ENCODE measurements at regions of chr4 and their contacts with region 1.

Region 1: DNA sequence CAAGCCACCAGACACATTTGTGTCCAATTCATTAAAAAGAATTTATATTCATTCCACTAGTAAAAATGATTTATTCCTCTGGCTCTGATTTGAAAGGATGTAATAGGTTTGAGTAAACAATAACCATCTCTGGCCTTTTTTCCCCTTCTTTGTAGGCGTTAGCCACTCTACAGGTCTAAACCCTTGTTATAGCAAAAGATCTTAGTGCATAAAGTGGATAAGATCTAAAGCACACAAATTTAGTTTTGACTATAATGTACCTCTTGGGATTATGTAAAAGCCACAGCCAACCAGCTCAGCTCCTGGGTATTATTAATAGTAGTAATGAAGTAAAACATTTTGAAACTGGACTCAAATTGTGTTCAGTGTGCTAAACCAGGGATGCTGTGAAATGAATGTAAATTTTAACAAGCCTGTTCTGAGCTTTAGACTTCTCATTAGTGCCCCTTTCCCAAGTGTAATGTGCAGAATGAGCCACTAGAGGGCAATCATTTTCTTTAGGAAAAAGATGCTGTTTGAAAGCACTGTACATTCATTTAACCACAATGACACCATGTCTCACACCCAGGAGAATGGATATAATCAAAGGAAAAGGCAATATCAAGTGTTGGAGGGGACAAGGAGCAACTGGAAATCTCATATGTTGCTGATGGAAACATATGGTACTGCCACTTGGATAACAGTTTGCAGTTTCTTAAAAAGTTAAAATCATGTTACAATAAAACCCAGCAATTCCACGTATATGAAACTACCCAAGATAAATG is 69.7 kb downstream of the KLHL8 start:
- DNase-seq: peak; percentile 59
- ATAC-seq: peak; percentile 88
- H3K4me3 Mint-ChIP-seq: no peak overlapping the region
- H3K27ac Mint-ChIP-seq: no peak overlapping the region
- H3K4me1 Mint-ChIP-seq: no peaks in the 10 kb centered on the region
- H3K27me3 Mint-ChIP-seq: no peaks in the 10 kb centered on the region
- CTCF ChIP-seq: peak; percentile 94

Region 2: GRCh38 chr4:87133183-87133582 is 17.5 kb before region 1 on chr4:
- CTCF ChIA-PET with region 1: interaction called, 23 read pairs
- POLR2A ChIA-PET with region 1: no interaction called
- intact Hi-C with region 1: no loop called
- DNase-seq: no peak
- ATAC-seq: no peak
- H3K4me3 Mint-ChIP-seq: no peak overlapping the region
- H3K27ac Mint-ChIP-seq: no peak overlapping the region
- H3K4me1 Mint-ChIP-seq: no peaks in the 10 kb centered on the region
- H3K27me3 Mint-ChIP-seq: no peaks in the 10 kb centered on the region
- CTCF ChIP-seq: no peak

Region 3: DNA sequence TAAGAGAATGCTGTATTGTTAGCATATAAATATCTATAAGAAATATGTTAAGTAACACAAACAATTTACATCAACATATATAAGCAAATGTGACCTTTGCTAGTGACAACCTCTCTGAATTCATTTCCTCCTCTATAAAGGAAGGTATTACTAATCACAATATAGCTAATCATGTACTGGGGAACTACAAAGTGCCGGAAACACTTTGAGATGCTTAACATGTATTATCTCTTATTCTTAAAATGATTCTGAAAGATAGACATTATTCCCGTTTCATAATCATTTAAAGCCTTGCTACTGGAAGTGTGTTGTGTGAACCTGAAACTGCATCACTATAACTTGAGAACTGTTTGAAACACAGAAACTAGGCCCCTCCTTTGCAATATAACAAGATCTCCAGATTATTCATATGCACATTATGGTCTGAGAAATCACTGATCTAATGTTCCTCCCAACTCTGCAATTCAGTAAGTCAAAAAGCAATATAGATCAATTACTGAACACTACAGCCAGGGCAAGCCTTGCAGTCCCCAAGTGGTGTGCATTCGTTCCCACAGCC is 15.7 kb after region 1 on chr4:
- CTCF ChIA-PET with region 1: interaction called, 19 read pairs
- POLR2A ChIA-PET with region 1: no interaction called
- intact Hi-C with region 1: no loop called
- DNase-seq: no peak
- ATAC-seq: no peak
- H3K4me3 Mint-ChIP-seq: no peak overlapping the region
- H3K27ac Mint-ChIP-seq: no peak overlapping the region
- H3K4me1 Mint-ChIP-seq: peaks cover 4% of the 10 kb centered on the region
- H3K27me3 Mint-ChIP-seq: no peaks in the 10 kb centered on the region
- CTCF ChIP-seq: no peak

Region 4: DNA sequence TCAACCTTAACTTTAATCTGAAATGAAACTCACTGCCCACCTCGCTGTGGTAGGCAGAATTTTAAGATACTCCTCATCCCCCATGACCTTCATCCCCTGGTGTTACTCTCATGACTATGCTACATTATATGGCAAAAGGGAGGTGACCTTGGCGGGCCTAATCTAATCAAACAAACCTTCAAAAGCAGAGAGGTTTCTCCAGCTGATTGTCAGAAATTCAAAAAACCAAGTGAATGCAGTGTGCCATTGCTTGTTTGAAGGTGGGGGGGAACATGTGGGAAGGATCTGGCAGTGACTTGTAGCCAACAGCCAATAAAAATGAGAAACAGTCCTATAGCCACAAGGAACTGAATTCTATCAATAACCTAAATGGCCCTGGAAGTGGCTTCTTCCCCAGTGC is 21.3 kb after region 1 on chr4:
- CTCF ChIA-PET with region 1: interaction called, 12 read pairs
- POLR2A ChIA-PET with region 1: no interaction called
- intact Hi-C with region 1: no loop called
- DNase-seq: no peak
- ATAC-seq: no peak
- H3K4me3 Mint-ChIP-seq: no peak overlapping the region
- H3K27ac Mint-ChIP-seq: no peak overlapping the region
- H3K4me1 Mint-ChIP-seq: no peaks in the 10 kb centered on the region
- H3K27me3 Mint-ChIP-seq: no peaks in the 10 kb centered on the region
- CTCF ChIP-seq: no peak

Region 5: DNA sequence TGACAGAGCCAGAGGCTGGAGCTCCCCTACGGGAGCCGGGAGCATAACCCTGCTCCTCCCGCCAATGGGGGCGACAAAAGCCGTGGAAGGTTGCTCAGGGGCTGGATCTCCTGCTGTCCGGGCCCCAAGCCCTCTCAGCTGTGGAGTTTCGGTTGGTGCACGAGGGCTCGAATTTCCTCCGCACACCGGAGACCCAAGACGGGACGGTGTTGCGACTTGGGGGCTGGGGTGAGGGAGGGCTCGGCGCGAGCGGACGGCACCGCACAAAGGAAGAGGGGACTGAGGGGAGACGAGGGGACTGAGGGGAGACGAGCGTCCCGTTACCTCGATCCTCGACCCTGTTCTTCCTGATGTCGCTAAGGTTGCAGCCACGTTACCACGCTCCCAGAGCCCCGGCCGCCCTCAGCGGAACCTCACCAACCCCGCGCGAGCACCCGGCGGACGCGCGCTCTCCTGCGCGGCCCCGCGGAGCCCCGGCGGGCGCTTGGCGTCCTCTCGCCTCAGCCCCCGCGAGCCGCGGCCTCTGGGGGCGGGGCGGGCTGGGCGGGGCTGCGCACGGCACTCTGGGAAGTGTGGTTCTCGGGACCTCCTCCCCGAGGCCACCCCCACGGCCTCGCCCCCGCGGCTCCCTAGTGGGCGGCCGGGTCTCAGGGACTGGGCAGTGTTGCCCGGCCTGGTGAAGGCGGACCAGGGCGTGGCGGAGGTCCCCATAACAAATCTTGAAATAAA is 69.6 kb after region 1 on chr4 and contains the start of gene KLHL8:
- CTCF ChIA-PET with region 1: interaction called, 17 read pairs
- POLR2A ChIA-PET with region 1: interaction called, 3 read pairs
- intact Hi-C with region 1: no loop called
- DNase-seq: peak; percentile 87
- ATAC-seq: peak; percentile 93
- H3K4me3 Mint-ChIP-seq: peak within 1 kb of the TSS; percentile 91
- H3K27ac Mint-ChIP-seq: peak within 1 kb of the TSS; percentile 92
- H3K4me1 Mint-ChIP-seq: peaks cover 17% of the 10 kb centered on the region
- H3K27me3 Mint-ChIP-seq: no peaks in the 10 kb centered on the region
- CTCF ChIP-seq: no peak
- total RNA-seq, gene KLHL8: 12.0 to 12.5 TPM

Region 6: DNA sequence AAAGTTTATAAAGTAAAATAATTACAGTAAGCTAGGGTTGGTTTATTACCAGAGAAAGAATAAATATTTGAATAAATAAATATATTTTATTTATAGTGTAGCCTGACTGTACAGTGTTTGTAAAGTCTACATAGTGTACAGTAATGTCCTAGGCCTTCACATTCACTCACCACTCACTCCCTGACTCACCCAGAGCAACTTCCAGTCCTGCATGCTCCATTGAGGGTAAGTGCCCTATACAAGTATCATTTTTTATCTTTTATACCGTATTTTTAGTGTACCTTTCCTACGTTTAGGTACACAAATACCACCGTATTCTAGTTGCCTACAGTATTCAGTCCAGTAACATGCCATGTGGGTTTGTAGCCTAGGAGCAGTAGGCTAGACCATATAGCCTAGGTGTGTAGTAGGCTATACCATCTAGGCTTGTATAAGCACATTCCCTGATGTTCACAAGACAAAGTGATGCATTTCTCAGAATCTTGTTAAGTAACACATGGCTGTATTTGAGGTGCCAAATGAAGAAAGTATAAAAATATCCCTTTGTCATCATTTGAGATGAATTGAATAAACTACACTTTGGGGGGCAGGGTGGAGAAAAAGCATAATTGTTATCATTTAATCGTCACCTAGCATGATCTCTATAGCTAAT is 84.5 kb after region 1 on chr4:
- CTCF ChIA-PET with region 1: interaction called, 50 read pairs
- POLR2A ChIA-PET with region 1: no interaction called
- intact Hi-C with region 1: loop called (anchors 2 kb)
- DNase-seq: no peak
- ATAC-seq: no peak
- H3K4me3 Mint-ChIP-seq: peak overlapping the region; percentile 72
- H3K27ac Mint-ChIP-seq: no peak overlapping the region
- H3K4me1 Mint-ChIP-seq: no peaks in the 10 kb centered on the region
- H3K27me3 Mint-ChIP-seq: peaks cover 3% of the 10 kb centered on the region
- CTCF ChIP-seq: no peak